Mammary epithelial cell (primary cell): ENCODE measurements at regions of chr17 and their contacts with region 1.

Region 1: DNA sequence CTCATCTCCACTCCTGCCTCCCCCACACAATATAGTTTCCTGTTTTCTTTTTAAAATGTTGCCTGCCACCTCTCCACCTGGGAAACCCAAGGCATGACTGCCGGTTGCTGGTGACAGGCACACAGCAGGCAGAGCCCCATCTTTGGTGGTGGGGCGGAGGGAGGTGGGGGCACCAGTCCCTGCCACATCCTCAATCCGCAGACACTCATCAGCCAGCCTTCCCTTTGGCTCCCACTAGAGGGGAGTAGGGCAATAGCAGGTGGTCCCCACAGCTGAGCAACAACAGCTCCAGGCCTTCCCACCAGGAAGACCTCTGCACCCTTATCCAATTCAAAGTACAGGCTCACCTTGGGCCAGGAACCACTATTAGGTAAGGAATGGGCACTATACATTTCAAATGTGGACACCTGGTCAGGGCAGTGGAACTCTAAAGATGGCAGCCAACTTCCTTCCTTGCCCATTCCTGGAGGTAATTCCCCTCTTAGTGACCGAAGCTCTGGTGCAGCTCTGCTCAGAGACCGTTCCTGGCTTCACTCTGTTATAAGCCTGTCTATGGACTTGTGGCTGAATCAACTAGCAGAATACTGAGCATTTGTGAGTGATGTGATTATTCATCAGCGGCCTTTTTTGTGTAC is 13.9 kb downstream of the RECQL5 start:
- DNase-seq: no peak
- H3K4me3 ChIP-seq: no peak overlapping the region
- H3K27ac ChIP-seq: no peak overlapping the region
- H3K4me1 ChIP-seq: no peaks in the 10 kb centered on the region
- H3K27me3 ChIP-seq: no peaks in the 10 kb centered on the region
- CTCF ChIP-seq: peak; percentile 58 to 61

Region 2: DNA sequence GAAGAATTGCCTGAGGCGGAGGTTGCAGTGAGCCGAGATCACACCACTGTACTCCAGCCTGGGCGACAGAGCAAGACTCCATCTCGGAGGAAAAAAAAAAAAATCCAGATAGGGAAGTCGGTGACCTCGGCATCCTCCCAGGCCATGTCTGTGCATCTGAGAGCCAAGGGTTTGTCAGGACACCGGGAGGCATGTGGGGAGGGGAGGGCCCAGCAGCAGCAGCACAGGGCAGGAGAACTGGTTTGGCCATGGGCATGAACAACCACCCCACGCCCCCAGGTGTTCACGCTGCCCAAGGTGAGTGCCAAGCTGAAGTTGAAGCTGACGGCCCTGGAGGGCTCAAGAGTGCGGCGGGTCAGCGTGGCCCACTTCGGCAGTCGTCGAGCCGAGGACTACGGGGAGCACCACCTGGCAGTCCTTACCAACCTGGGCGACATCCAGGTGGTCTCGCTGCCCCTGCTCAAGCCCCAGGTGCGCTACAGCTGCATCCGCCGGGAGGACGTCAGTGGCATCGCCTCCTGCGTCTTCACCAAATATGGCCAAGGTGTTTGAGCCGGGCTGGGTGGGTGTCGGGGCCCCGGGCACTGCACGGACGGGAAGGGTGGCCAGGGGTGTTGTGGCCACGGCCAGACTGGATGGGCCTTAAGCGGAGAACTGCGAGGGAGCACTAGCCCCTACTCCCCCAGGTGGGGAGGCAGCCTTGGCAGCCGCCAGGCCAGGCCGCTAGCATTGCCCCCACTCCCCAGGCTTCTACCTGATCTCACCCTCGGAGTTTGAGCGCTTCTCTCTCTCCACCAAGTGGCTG is 80.1 kb before region 1 on chr17:
- CTCF ChIA-PET with region 1: no interaction called
- dilution Hi-C with region 1: no loop called
- in situ Hi-C with region 1: no loop called
- intact Hi-C with region 1: no loop called
- DNase-seq: no peak
- H3K4me3 ChIP-seq: no peak overlapping the region
- H3K27ac ChIP-seq: no peak overlapping the region
- H3K4me1 ChIP-seq: no peaks in the 10 kb centered on the region
- H3K27me3 ChIP-seq: no peaks in the 10 kb centered on the region
- CTCF ChIP-seq: no peak

Region 3: DNA sequence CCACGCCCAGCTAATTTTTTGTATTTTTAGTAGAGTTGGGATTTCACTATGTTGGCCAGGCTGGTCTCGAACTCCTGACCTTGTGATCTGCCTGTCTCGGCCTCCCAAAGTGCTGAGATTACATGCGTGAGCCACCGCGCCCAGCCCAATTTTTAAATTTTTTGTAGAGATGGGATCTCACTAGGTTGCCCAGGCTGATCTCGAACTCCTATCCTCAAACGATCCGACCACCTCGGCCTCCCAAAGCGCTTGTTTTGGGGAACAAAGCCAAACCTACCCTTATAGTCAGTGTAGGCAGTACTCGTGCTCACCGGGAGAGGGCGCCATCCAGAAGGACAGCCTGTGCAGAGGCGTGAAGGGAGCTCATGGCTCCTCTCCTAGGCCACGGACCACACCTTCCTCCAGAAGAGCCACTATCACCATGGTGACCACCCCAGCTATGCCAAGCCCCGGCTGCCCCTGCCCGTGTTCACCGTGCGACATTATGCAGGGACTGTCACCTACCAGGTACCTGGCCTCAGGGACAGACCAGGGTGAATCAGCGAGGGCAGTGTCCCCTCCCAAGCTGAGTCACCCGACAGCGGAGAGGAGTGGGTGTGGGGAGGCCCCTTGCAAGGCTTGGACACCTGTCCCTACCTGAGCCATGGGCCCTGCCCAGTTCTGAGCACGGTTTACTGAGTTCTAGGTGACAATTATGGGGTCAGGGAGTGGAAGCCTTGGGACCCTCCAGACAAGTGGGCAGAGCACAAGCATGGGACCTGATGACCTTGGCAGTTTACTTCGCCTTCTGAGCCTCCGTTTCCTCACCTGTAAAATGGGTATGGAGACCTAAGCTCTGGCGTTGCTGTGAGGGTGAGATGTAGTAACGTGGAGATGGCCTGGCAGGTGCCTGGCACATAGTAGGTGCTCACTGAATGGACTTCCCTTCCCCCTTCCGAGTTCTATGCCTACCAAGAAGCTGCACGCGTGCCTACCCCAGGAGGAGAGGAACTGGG is 51.7 kb before region 1 on chr17:
- CTCF ChIA-PET with region 1: interaction called, 15 read pairs
- dilution Hi-C with region 1: no loop called
- in situ Hi-C with region 1: no loop called
- intact Hi-C with region 1: no loop called
- DNase-seq: peak; percentile 14
- H3K4me3 ChIP-seq: no peak overlapping the region
- H3K27ac ChIP-seq: no peak overlapping the region
- H3K4me1 ChIP-seq: peaks cover 9% of the 10 kb centered on the region
- H3K27me3 ChIP-seq: peaks cover 2% of the 10 kb centered on the region
- CTCF ChIP-seq: peak; percentile 44 to 56